Common myeloid progenitor, CD34-positive (primary cell): ENCODE measurements at regions of chr13 and their contacts with region 1.

Region 1: DNA sequence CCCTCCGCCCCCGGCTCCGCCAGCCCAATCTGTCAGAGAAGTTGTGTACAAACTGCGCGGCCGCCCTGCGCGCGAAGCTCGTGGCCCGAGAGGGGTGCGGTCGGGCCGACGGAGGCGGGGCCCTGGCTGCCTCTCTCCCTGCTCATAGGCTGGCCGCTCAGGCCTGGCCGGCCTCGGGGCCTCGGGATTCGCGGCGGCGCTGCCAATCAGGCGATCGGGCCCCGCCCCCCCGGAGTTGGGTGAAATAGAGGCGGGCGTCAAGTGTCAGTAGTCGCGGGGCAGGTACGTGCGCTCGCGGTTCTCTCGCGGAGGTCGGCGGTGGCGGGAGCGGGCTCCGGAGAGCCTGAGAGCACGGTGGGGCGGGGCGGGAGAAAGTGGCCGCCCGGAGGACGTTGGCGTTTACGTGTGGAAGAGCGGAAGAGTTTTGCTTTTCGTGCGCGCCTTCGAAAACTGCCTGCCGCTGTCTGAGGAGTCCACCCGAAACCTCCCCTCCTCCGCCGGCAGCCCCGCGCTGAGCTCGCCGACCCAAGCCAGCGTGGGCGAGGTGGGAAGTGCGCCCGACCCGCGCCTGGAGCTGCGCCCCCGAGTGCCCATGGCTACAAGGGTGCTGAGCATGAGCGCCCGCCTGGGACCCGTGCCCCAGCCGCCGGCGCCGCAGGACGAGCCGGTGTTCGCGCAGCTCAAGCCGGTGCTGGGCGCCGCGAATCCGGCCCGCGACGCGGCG is at the start of gene KLF5:
- DNase-seq: peak; percentile 91 to 96 (median 95)
- H3K4me3 ChIP-seq: peak within 1 kb of the TSS; percentile 57 to 89 (median 82)
- H3K27ac ChIP-seq: no peak within 1 kb of the TSS
- H3K4me1 ChIP-seq: peaks cover 2 to 29% (median 13%) of the 10 kb centered on the region in 4 experiments
- H3K27me3 ChIP-seq: peaks cover 0 to 3% (median 2%) of the 10 kb centered on the region in 5 experiments

Region 2: DNA sequence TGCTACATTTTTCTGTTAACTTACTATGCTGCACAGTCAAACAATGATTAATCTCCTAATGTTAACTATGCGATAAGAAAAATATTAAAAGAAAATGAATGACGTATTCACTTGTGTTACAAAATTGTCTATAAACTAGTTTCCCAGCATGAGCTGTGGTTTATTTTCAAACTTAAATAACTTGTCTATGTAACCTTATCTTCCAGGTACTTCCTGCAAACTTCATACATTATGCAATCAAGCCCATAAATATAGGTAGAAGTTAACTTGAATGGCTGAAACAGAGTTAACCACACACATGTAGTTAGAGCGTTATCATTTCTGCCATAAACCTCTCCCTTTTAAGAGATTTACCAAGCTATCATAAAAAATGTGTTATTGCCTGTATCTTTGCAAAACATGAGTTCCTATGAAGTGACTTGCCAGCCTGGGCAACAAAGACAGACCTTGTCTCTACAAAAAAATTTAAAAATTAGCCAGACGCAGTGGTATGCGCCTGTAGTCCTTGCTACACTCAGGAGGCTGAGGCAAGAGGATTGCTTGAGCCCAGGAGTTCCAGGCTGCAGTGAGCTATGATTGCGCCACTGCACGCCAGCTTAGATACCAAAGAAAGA is 17.8 kb before region 1 on chr13:
- CTCF ChIA-PET with region 1: interaction called, 4 read pairs
- POLR2A ChIA-PET with region 1: interaction called, 12 read pairs
- DNase-seq: peak; percentile 90 to 98 (median 94)
- H3K4me3 ChIP-seq: peak overlapping the region in 1 of 7 experiments; percentile 51
- H3K27ac ChIP-seq: no peak overlapping the region
- H3K4me1 ChIP-seq: peaks cover 2 to 15% (median 5%) of the 10 kb centered on the region in 4 experiments
- H3K27me3 ChIP-seq: no peaks in the 10 kb centered on the region

Region 3: GRCh38 chr13:73073050-73073449 is 14.2 kb after region 1 on chr13:
- CTCF ChIA-PET with region 1: interaction called, 16 read pairs
- POLR2A ChIA-PET with region 1: interaction called, 4 read pairs
- DNase-seq: no peak
- H3K4me3 ChIP-seq: no peak overlapping the region
- H3K27ac ChIP-seq: no peak overlapping the region
- H3K4me1 ChIP-seq: peaks cover 0 to 18% (median 1%) of the 10 kb centered on the region in 4 experiments
- H3K27me3 ChIP-seq: no peaks in the 10 kb centered on the region